ENCODE measurements at regions of chr1 and their contacts with region 1.

Region 1: GRCh38 chr1:67535474-67535873 is 105.3 kb upstream of the SERBP1 start:
- DNase-seq: peak; percentile 92
- H3K4me3 ChIP-seq: no peak overlapping the region
- H3K27ac ChIP-seq: no peak overlapping the region
- H3K4me1 ChIP-seq: peaks cover 10% of the 10 kb centered on the region
- H3K27me3 ChIP-seq: no peaks in the 10 kb centered on the region
- CTCF ChIP-seq: peak; percentile 93 to 94
- POLR2A ChIP-seq: no peak

Region 2: DNA sequence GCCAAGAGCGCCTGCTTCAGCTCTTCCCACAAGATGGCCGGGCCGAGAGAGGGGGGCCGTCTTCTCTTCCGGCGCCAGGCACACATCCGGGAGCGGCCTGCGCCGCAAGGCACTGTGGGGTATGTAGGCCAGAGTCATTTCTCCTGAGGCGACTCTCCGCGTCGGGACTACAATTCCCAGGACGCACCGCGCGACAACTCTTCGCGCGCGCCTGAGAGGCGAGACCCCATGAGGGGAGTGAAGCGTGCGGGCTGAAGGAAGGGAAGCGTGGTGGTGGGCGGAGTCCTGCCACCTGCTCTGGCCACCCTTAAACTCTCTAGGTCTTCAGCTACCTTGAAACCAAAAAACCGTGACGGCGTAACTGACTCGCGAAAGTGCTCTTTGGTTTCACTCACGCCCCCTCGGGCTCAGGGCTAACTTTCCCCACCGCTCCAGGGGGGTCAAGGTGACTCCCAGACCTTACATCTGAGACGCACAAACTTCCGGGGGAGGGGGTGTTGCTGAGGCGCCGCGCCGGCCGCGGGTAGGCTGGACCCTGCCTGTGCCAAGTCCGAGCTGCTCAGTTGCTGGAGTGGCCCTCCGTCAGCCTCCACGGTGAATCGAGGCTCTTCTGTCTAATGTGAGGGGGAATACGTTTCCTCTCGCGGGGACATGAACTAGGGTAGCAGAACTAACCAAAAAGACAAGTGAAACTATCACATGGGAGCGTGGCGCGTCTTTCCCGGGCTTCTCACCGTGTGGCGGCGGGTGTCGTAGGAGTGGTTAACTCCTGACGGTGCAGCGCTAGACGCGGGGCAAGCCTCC is 104.9 kb before region 1 on chr1 and contains the start of gene SERBP1:
- CTCF ChIA-PET with region 1: no interaction called
- POLR2A ChIA-PET with region 1: no interaction called
- dilution Hi-C with region 1: no loop called
- intact Hi-C with region 1: no loop called
- DNase-seq: peak; percentile 99
- H3K4me3 ChIP-seq: peak within 1 kb of the TSS; percentile 92 to 99 (median 93)
- H3K27ac ChIP-seq: peak within 1 kb of the TSS; percentile 75
- H3K4me1 ChIP-seq: peaks cover 27% of the 10 kb centered on the region
- H3K27me3 ChIP-seq: no peaks in the 10 kb centered on the region
- CTCF ChIP-seq: no peak
- POLR2A ChIP-seq: peak; percentile 16
- total RNA-seq, gene SERBP1: 290 and 293 TPM in 2 replicates

Region 3: DNA sequence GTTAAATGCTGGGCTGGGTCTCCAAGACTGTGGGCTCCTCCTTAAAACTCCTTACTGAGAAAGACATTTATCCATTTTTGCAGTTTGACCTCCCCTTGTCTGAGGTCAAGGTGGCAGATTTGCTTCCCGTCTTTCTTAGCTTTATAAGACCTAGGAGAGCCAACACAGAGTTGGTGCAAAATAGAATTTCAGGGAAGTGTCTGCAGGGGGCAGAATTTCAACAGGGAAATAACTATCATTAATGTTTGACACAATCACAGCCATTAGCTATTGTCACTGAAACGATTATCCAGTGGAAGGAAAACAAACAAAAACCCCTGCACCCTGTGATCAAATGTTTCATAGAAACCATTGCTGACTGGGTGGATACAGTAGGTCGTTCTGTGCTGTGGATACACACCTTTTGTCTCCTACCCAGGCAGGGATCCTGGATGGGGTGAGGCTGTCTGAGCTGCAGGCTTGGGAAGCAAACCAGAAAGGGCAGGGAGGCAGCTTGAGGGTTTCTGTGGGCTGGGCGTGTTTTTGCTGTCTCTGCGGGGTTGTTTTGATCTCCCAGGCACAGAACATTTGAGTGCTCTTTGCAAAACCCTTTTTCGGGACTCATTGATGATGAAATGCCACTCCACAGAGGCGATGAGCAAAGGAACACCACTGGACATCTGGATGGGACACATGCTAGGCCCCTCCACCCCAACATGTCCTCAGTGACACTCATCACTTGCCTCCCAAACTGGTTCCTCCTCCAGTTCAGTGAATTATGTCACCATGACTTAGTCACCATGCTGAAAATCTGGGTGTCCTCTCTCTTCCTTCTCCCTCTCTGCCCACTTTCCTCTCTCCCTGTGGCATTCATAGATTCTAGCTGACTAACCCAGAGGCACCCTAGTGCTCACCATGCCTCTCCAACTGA is 11.1 kb before region 1 on chr1:
- CTCF ChIA-PET with region 1: interaction called, 11 read pairs
- POLR2A ChIA-PET with region 1: no interaction called
- dilution Hi-C with region 1: no loop called
- intact Hi-C with region 1: no loop called
- DNase-seq: no peak
- H3K4me3 ChIP-seq: no peak overlapping the region
- H3K27ac ChIP-seq: no peak overlapping the region
- H3K4me1 ChIP-seq: peaks cover 11% of the 10 kb centered on the region
- H3K27me3 ChIP-seq: no peaks in the 10 kb centered on the region
- CTCF ChIP-seq: peak in 1 of 2 donors; percentile 22
- POLR2A ChIP-seq: no peak

Region 4: DNA sequence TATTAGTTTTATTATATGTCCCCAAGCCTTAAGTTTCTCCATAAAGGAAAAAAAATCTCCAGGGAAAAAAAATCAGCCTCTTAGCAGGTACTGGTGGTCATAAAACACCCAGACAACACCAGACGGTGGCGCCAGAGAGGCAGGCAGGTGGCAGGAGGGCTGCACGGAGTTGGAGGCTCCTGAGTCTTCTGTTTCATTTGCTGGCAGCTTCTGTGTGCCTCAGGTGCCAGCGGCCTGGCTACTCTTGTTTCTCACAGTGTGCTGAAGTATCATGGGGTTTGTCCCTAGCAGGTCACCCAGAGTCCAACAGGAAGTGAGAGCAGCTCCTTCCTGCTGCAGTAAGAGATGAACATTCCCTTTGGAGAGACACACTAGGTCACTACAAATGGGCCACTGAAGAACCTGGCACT is 26.2 kb after region 1 on chr1:
- CTCF ChIA-PET with region 1: interaction called, 29 read pairs
- POLR2A ChIA-PET with region 1: no interaction called
- dilution Hi-C with region 1: no loop called
- intact Hi-C with region 1: loop called (anchors 1 kb)
- DNase-seq: peak; percentile 92
- H3K4me3 ChIP-seq: no peak overlapping the region
- H3K27ac ChIP-seq: no peak overlapping the region
- H3K4me1 ChIP-seq: peaks cover 11% of the 10 kb centered on the region
- H3K27me3 ChIP-seq: no peaks in the 10 kb centered on the region
- CTCF ChIP-seq: peak; percentile 85
- POLR2A ChIP-seq: no peak

Region 5: DNA sequence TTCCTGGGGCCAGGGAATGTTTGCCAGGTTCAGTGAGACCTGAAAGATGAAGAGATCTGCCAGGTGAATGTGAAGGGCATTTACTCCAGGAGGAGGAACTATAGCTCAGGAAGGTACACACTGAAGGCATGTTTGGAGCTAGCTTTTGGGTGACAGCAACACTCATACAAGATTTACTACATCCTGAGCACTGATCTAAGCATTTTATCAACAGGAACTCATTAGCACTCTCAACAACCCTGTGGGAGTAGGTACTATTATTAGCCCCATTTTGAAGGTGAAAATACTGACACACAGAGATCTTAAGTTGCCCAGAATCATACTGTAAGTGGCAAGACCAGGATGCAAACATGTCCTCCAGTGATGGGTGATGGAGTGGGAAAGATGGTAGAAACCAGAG is 156.2 kb after region 1 on chr1:
- CTCF ChIA-PET with region 1: interaction called, 64 read pairs
- POLR2A ChIA-PET with region 1: interaction called, 4 read pairs
- dilution Hi-C with region 1: no loop called
- intact Hi-C with region 1: loop called (anchors 1 kb)
- DNase-seq: no peak
- H3K4me3 ChIP-seq: no peak overlapping the region
- H3K27ac ChIP-seq: no peak overlapping the region
- H3K4me1 ChIP-seq: peaks cover 20% of the 10 kb centered on the region
- H3K27me3 ChIP-seq: no peaks in the 10 kb centered on the region
- CTCF ChIP-seq: no peak
- POLR2A ChIP-seq: no peak

Region 6: DNA sequence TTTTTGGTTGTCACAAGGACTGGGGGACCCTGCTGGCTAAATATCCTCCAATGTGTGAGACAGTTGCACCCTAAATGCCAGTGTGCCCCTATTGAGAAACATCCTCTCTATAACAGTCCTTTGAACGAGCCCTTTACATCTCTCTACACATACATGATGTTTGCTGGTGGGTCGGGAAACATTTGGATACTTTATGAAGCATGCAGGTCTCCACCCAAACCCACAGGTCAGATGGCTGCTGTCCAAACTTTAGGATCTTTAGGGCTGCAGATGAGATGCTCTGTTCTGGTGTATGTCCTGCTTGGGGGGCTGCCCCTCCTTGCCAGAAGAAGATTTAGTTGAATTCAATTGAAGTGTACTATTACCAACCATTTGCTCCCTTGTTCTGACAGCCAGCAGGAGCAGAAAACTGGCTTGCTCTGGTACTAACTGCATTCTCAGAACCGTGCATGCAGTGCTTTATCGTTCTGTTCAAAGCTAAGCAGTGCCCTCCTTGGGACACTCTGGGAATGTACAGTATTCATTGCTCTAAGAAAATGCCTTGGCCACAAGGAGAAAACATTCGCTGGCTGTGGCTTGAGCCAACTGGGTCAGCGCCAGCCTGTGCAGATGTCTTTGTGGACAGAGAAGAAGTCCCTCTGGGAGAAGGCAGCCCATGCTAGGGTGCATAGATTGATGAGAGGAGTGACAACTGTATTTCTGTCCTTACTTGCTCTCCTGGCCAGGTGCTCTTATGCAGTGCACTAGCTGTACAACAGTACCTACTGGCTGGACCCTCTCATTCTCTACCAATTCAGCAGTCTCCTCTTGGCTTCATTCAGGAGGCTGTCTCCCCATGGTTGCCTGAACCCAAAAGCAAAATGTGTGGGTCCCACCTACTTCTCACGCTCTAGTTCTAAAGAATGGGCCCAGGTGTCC is 576.3 kb after region 1 on chr1:
- CTCF ChIA-PET with region 1: interaction called, 4 read pairs
- POLR2A ChIA-PET with region 1: no interaction called
- dilution Hi-C with region 1: no loop called
- intact Hi-C with region 1: loop called (anchors 2 kb)
- DNase-seq: peak; percentile 88
- H3K4me3 ChIP-seq: no peak overlapping the region
- H3K27ac ChIP-seq: no peak overlapping the region
- H3K4me1 ChIP-seq: peaks cover 8% of the 10 kb centered on the region
- H3K27me3 ChIP-seq: no peaks in the 10 kb centered on the region
- CTCF ChIP-seq: peak; percentile 68
- POLR2A ChIP-seq: no peak